ENCODE measurements at regions of chr4 and their contacts with region 1.

Region 1: GRCh38 chr4:70687821-70688794 is at the start of gene UTP3:
- DNase-seq: peak; percentile 91 to 99 (median 95)

Region 2: DNA sequence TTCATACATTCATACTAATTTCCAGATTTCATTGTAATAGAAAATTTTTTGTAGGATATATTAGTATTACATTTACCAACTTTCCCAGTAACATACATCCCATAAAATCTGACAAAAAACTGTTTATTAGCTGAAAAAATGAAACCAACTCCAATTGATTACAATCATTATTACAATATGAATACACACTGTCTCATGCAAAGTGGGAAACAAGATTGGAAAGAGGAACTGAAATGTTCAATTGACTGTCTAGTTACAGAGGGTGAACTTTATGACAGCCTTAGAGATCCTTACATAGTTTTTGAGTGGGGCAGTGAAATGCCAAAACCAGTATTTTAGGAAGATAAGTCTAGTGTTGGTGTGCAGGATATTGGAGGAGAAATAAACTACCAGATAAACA is 98.3 kb before region 1 on chr4:
- intact Hi-C with region 1: no loop called
- DNase-seq: no peak

Region 3: DNA sequence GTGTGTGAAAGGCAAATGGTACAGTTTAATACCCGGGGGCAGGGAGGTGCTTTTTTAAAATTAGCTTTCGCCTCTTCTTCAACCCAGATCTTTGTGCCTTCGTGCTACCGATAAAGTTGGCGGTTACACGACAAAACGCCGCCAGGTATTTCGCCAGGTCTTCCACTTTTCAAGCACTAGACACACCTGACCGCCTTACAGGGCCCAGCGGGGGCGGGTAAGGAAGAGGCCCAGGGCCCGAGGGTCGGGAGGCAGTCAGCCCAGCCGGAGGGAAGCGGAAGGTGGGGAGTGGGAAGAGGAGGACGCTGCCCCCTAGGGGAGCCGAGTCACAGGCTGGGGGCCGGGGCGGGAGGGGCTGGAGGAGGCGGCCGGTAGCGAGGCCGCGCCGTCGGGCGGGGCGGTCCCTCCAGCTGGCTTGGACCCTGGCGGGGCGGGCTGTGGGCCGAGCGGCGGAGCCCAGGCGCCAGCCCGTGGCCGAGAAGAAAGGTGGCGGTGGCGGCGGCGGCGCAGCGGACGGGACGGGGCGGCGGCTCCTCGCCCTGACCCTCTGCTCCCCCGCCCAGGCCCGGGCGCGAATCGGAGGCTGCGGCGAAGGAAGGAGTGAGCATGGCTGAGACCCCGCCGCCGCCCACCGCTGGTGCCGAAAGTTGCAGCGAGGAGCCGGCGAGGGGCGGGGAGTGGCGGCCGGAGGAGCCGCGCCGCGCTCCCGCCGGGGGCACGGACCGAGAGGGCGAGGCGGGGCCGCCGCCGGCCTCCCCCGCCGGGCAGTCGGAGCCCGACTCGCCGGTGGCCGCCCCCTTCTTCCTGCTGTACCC is 16.4 kb after region 1 on chr4:
- intact Hi-C with region 1: loop called (anchors 2 kb)
- DNase-seq: peak; percentile 28 to 90 (median 77)

Region 4: DNA sequence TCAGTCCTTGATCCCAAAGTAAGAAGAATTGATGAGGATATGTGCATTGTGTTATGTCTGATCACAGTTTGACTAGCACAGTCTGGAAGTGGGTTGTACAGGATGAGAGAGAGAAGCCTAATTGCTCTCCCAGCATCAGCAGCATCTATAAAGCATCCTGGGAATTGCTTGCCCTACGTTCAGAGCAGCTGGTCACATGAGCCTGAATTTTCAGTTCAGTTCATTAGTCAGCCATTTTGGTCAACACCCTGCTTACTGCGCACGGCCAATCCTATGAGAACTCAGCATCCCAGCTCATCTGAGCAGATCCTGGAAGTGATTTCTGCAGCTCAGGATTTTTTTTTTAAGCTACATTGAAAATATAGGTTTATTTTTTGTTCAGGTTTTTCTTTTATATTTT is 33.6 kb after region 1 on chr4 and contains the start of gene RUFY3:
- intact Hi-C with region 1: loop called (anchors 5 kb)
- DNase-seq: peak; percentile 46 to 94 (median 84)

Region 5: DNA sequence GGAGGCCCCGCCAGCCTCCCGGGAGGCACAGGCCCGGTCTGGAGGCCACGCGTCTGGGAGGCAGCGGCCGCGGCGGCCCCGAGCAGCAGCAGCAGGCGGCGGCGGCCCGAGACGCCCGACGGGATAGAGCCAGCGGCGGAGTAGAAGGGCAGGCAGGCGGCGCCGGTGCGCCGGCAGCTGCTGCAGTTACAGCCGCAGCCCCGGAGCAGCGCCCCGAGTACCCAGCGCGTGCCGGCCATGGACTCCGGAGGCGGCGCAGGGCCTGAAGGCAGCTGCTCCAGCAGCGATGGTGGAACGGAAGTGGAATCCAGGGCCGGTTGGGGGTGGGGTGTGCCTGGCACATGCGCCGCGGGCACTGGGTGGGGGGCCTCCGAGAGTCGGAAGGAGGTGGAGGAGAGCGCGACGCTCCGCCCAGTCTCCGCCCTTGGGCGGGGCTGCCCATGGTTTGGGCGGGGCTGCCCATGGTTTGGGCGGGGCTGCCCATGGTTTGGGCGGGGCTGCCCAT is 151.5 kb after region 1 on chr4 and contains the start of gene GRSF1:
- intact Hi-C with region 1: loop called (anchors 2 kb)
- DNase-seq: peak; percentile 81 to 97 (median 95)